Posterior vena cava (tissue), 2 donors: ENCODE measurements at regions of chr3 and their contacts with region 1.

Region 1: DNA sequence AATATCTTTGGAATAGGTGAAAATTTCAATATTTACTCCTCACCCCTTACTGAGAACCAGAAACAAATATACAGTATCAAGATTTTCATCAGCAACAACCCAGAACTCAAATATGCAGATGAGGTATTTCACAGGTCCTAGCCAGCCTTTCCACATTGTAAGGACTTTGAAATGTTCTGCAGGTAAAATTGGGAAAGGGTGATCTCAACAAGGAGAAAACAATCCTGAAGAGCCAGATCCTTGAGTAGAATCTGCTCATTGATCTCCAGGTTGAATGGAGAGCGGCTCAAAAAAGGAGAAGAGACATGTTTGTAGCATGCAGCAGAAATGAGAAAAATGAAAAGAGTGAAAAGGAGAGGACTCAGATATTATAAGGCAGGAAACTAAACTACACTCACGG is 493.3 kb upstream of the NAALADL2 start:
- DNase-seq: no peak

Region 2: DNA sequence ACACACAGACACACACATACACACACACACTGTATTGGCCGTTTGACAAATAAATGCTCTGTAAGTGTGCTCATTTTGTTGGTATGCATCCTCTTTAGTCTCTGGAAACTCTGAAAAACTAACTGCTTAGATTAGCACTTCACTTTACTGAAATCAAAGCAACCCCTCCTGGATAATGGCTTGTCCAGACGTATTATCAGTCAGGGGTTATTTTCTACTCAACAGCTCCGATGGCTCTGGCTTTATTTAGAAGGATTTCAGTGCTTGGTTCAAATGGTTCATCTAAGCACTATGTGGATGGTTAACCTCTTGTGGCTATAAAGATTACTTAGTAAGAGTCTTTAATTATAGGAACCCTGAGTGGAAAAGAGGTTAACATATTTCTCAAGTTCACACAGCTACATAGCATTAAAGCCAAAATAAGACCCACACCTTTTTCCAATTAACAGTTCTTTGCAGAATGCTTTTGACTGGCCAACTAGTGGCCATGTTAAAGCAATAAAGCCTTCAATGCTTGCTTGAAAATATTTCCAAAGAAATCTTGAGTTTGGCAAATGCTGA is 22.8 kb before region 1 on chr3:
- intact Hi-C with region 1: loop called in 1 of 2 experiments (anchors 1 kb)
- DNase-seq: no peak

Region 3: DNA sequence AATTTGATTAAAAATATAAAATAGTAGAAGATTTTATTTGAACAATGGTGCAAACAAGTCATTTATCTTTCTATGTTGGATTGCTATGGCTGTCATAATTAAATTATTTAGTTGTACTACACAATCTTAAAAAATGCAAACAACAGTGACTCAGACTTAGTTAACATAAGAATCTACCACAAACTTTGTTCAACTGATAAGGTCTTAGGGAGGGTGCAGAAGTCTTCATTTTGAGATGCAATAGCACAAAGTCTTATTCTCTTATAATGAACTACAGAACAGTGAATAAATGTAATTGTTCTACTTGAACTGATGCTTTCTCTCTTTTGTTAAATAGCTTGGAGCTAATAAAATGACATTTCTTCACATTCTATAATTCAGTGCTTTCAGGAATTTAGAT is 10.5 kb after region 1 on chr3:
- intact Hi-C with region 1: loop called in 1 of 2 experiments (anchors 1 kb)
- DNase-seq: no peak

Region 4: GRCh38 chr3:174397848-174398247 is 32.0 kb after region 1 on chr3:
- intact Hi-C with region 1: no loop called
- DNase-seq: no peak